Activated B cell treated with CpG ODN at 0.5 μM for 24 hours (primary cell): ENCODE measurements at regions of chrX and their contacts with region 1.

Region 1: GRCh38 chrX:102950908-102951866 is 14.1 kb downstream of the RAB40AL start:
- DNase-seq: peak; percentile 27
- ATAC-seq: peak; percentile 69
- H3K4me3 Mint-ChIP-seq: peak overlapping the region; percentile 72
- H3K27ac Mint-ChIP-seq: no peak overlapping the region
- H3K4me1 Mint-ChIP-seq: peaks cover 6% of the 10 kb centered on the region
- H3K27me3 Mint-ChIP-seq: no peaks in the 10 kb centered on the region
- CTCF ChIP-seq: no peak

Region 2: GRCh38 chrX:102067966-102068708 is 883.0 kb before region 1 on chrX:
- CTCF ChIA-PET with region 1: interaction called, 9 read pairs
- POLR2A ChIA-PET with region 1: no interaction called
- intact Hi-C with region 1: loop called (anchors 1 kb)
- DNase-seq: no peak
- ATAC-seq: no peak
- H3K4me3 Mint-ChIP-seq: no peak overlapping the region
- H3K27ac Mint-ChIP-seq: no peak overlapping the region
- H3K4me1 Mint-ChIP-seq: no peaks in the 10 kb centered on the region
- H3K27me3 Mint-ChIP-seq: peaks cover 3% of the 10 kb centered on the region
- CTCF ChIP-seq: no peak

Region 3: GRCh38 chrX:102995316-102995715 is 44.1 kb after region 1 on chrX:
- CTCF ChIA-PET with region 1: no interaction called
- POLR2A ChIA-PET with region 1: no interaction called
- intact Hi-C with region 1: no loop called
- DNase-seq: no peak
- ATAC-seq: no peak
- H3K4me3 Mint-ChIP-seq: no peak overlapping the region
- H3K27ac Mint-ChIP-seq: no peak overlapping the region
- H3K4me1 Mint-ChIP-seq: no peaks in the 10 kb centered on the region
- H3K27me3 Mint-ChIP-seq: no peaks in the 10 kb centered on the region
- CTCF ChIP-seq: no peak

Region 4: GRCh38 chrX:103157496-103158320 is 206.5 kb after region 1 on chrX:
- CTCF ChIA-PET with region 1: no interaction called
- POLR2A ChIA-PET with region 1: no interaction called
- intact Hi-C with region 1: loop called (anchors 5 kb)
- DNase-seq: no peak
- ATAC-seq: no peak
- H3K4me3 Mint-ChIP-seq: no peak overlapping the region
- H3K27ac Mint-ChIP-seq: no peak overlapping the region
- H3K4me1 Mint-ChIP-seq: no peaks in the 10 kb centered on the region
- H3K27me3 Mint-ChIP-seq: no peaks in the 10 kb centered on the region
- CTCF ChIP-seq: no peak

Region 5: DNA sequence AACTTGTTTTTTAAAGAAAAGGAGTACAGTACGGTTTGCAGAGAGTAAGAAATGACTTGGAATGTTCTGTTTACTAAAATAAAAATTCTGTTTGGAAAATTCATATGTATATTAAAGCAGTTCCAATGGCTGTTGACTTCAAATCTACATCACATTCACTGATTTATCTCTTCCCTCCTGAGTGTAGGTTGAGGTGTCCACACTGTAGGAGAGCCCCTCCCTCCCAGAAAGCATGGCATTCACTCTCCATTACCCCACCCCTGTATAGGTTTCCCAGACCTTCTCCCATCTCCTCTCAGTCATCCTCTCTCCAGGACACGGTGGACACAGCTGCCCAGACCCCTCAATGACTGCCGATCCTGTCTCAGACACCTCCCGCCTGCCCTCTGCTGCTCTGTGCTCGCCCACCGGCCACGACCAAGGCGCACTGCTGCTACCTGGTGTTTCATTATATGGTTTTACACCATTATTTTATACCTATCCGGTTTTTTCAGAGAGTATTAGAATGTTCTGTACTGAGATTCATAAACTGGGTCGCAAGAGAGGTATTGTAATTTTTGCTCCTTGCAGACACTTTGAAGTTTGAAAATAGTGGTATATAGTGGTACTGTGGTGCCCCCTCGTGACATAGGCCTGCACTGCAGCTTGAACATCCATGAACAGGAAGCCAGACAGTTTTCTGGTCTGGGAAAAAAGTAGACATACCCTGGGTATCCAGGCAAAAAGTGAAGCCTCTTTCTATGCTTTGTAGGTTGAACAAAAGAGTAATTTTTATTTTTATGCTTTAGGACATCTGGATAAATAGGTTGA is 225.0 kb after region 1 on chrX:
- CTCF ChIA-PET with region 1: interaction called, 9 read pairs
- POLR2A ChIA-PET with region 1: no interaction called
- intact Hi-C with region 1: loop called (anchors 1 kb)
- DNase-seq: no peak
- ATAC-seq: no peak
- H3K4me3 Mint-ChIP-seq: no peak overlapping the region
- H3K27ac Mint-ChIP-seq: no peak overlapping the region
- H3K4me1 Mint-ChIP-seq: peaks cover 3% of the 10 kb centered on the region
- H3K27me3 Mint-ChIP-seq: peaks cover 4% of the 10 kb centered on the region
- CTCF ChIP-seq: no peak

Region 6: DNA sequence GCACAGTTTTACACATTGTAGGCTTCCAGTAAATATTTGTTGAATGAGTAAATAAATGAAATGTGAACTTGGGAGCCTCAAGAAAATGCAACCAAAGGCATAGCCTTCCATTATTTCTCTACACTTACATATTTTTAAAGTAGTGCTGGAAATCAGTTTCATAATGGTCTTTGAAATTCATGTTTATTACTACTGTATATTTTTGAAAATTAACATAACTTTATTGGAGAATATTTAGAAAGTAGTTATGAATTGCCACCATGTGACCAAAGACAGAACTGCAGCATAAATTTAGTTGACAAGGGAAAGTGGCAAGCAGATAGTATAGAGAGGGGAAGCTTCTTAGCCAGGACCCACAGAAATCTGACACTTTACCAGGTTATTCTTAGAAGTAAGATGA is 297.4 kb after region 1 on chrX:
- CTCF ChIA-PET with region 1: no interaction called
- POLR2A ChIA-PET with region 1: no interaction called
- intact Hi-C with region 1: loop called (anchors 10 kb)
- DNase-seq: no peak
- ATAC-seq: no peak
- H3K4me3 Mint-ChIP-seq: no peak overlapping the region
- H3K27ac Mint-ChIP-seq: no peak overlapping the region
- H3K4me1 Mint-ChIP-seq: peaks cover under 1% of the 10 kb centered on the region
- H3K27me3 Mint-ChIP-seq: no peaks in the 10 kb centered on the region
- CTCF ChIP-seq: no peak

Region 7: GRCh38 chrX:103464774-103465117 is 513.6 kb after region 1 on chrX:
- CTCF ChIA-PET with region 1: interaction called, 4 read pairs
- POLR2A ChIA-PET with region 1: no interaction called
- intact Hi-C with region 1: loop called (anchors 2 kb)
- DNase-seq: peak; percentile 26
- ATAC-seq: peak; percentile 87
- H3K4me3 Mint-ChIP-seq: peak overlapping the region; percentile 79
- H3K27ac Mint-ChIP-seq: no peak overlapping the region
- H3K4me1 Mint-ChIP-seq: peaks cover 10% of the 10 kb centered on the region
- H3K27me3 Mint-ChIP-seq: no peaks in the 10 kb centered on the region
- CTCF ChIP-seq: no peak